K562 (cell line): ENCODE measurements at regions of chr5 and their contacts with region 1.

Region 1: GRCh38 chr5:80093796-80094195 is 58.6 kb downstream of the THBS4 start:
- DNase-seq: peak in 1 of 4 experiments; percentile 21
- ATAC-seq: peak; percentile 57
- H3K4me3 ChIP-seq: no peak overlapping the region
- H3K27ac ChIP-seq: no peak overlapping the region
- H3K4me1 ChIP-seq: no peaks in the 10 kb centered on the region
- H3K27me3 ChIP-seq: peaks cover 0 to 8% of the 10 kb centered on the region in 2 experiments; a peak in 3 of 5 replicates
- CTCF ChIP-seq: no peak
- EP300 ChIP-seq: no peak
- POLR2A ChIP-seq: no peak
- RAD21 ChIP-seq: no peak

Region 2: GRCh38 chr5:79901631-79902030 is 192.2 kb before region 1 on chr5:
- CTCF ChIA-PET with region 1: no interaction called
- POLR2A ChIA-PET with region 1: no interaction called
- in situ Hi-C with region 1: no loop called
- intact Hi-C with region 1: no loop called
- DNase-seq: no peak
- ATAC-seq: no peak
- H3K4me3 ChIP-seq: no peak overlapping the region
- H3K27ac ChIP-seq: no peak overlapping the region
- H3K4me1 ChIP-seq: no peaks in the 10 kb centered on the region
- H3K27me3 ChIP-seq: no peaks in the 10 kb centered on the region; a peak in 1 of 5 replicates
- CTCF ChIP-seq: no peak
- EP300 ChIP-seq: no peak
- POLR2A ChIP-seq: no peak
- RAD21 ChIP-seq: no peak

Region 3: DNA sequence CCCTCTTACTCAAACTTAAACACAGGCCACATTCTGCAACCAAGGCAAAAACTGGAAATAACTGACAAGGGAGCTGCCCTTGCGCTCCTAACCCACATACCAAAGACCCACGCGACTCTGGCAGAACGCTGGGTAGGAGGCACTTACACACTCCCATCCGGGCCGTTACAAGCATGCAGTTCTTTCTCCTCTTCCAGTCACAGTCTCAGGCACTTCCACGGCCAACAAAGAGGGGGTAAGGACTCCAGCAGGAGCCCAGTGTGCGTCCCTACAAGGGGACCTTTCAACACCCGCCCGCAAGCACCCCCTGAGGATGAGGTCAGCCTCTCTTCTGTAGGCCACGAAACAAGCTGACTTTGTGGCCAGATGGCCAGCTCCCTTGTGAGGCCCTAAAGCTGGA is 104.6 kb after region 1 on chr5:
- CTCF ChIA-PET with region 1: no interaction called
- POLR2A ChIA-PET with region 1: no interaction called
- in situ Hi-C with region 1: loop called (anchors 5 kb)
- intact Hi-C with region 1: no loop called
- DNase-seq: no peak
- ATAC-seq: no peak
- H3K4me3 ChIP-seq: no peak overlapping the region
- H3K27ac ChIP-seq: no peak overlapping the region
- H3K4me1 ChIP-seq: peaks cover 0 to 8% of the 10 kb centered on the region in 2 experiments; a peak in 3 of 5 replicates
- H3K27me3 ChIP-seq: no peaks in the 10 kb centered on the region
- CTCF ChIP-seq: no peak
- EP300 ChIP-seq: no peak
- POLR2A ChIP-seq: no peak
- RAD21 ChIP-seq: no peak

Region 4: GRCh38 chr5:80275347-80275746 is 181.6 kb after region 1 on chr5:
- CTCF ChIA-PET with region 1: interaction called, 41 read pairs
- POLR2A ChIA-PET with region 1: no interaction called
- in situ Hi-C with region 1: no loop called
- intact Hi-C with region 1: loop called (anchors 1 kb)
- DNase-seq: peak in 2 of 4 experiments; percentile 19 to 41
- ATAC-seq: peak; percentile 78
- H3K4me3 ChIP-seq: no peak overlapping the region
- H3K27ac ChIP-seq: no peak overlapping the region
- H3K4me1 ChIP-seq: no peaks in the 10 kb centered on the region
- H3K27me3 ChIP-seq: no peaks in the 10 kb centered on the region; a peak in 1 of 5 replicates
- CTCF ChIP-seq: peak; percentile 66 to 80 (median 67)
- EP300 ChIP-seq: no peak
- POLR2A ChIP-seq: no peak
- RAD21 ChIP-seq: peak; percentile 65 to 88

Region 5: GRCh38 chr5:80308526-80308925 is 214.7 kb after region 1 on chr5:
- CTCF ChIA-PET with region 1: interaction called, 19 read pairs
- POLR2A ChIA-PET with region 1: no interaction called
- in situ Hi-C with region 1: no loop called
- intact Hi-C with region 1: loop called (anchors 1 kb)
- DNase-seq: peak in 1 of 4 experiments; percentile 14
- ATAC-seq: peak; percentile 66
- H3K4me3 ChIP-seq: no peak overlapping the region
- H3K27ac ChIP-seq: no peak overlapping the region
- H3K4me1 ChIP-seq: no peaks in the 10 kb centered on the region
- H3K27me3 ChIP-seq: peaks cover 0 to 8% of the 10 kb centered on the region in 2 experiments; a peak in 3 of 5 replicates
- CTCF ChIP-seq: no peak
- EP300 ChIP-seq: no peak
- POLR2A ChIP-seq: no peak
- RAD21 ChIP-seq: no peak

Region 6: GRCh38 chr5:80369521-80369920 is 275.7 kb after region 1 on chr5:
- CTCF ChIA-PET with region 1: no interaction called
- POLR2A ChIA-PET with region 1: no interaction called
- in situ Hi-C with region 1: no loop called
- intact Hi-C with region 1: no loop called
- DNase-seq: no peak
- ATAC-seq: no peak
- H3K4me3 ChIP-seq: no peak overlapping the region
- H3K27ac ChIP-seq: no peak overlapping the region
- H3K4me1 ChIP-seq: no peaks in the 10 kb centered on the region; a peak in 1 of 5 replicates
- H3K27me3 ChIP-seq: no peaks in the 10 kb centered on the region
- CTCF ChIP-seq: no peak
- EP300 ChIP-seq: no peak
- POLR2A ChIP-seq: no peak
- RAD21 ChIP-seq: no peak

Region 7: GRCh38 chr5:81194633-81195333 is 1101.0 kb after region 1 on chr5:
- CTCF ChIA-PET with region 1: interaction called, 5 read pairs
- POLR2A ChIA-PET with region 1: no interaction called
- in situ Hi-C with region 1: no loop called
- intact Hi-C with region 1: loop called (anchors 10 kb)
- DNase-seq: peak; percentile 87 to 88 (median 88)
- ATAC-seq: peak; percentile 100
- H3K4me3 ChIP-seq: no peak overlapping the region
- H3K27ac ChIP-seq: no peak overlapping the region
- H3K4me1 ChIP-seq: peaks cover 4% of the 10 kb centered on the region in 2 experiments; a peak in 4 of 5 replicates
- H3K27me3 ChIP-seq: peaks cover 18 to 42% of the 10 kb centered on the region in 2 experiments
- CTCF ChIP-seq: peak; percentile 93 to 95 (median 93)
- EP300 ChIP-seq: no peak
- POLR2A ChIP-seq: no peak
- RAD21 ChIP-seq: peak; percentile 92